GM12878 (cell line): ENCODE measurements at regions of chr3 and their contacts with region 1.

Region 1: GRCh38 chr3:61627768-61628185 is 66.4 kb downstream of the PTPRG start:
- DNase-seq: no peak
- ATAC-seq: no peak
- H3K4me3 ChIP-seq: no peak overlapping the region
- H3K27ac ChIP-seq: no peak overlapping the region
- H3K4me1 ChIP-seq: no peaks in the 10 kb centered on the region; the same call in 1 of the 2 replicates
- H3K27me3 ChIP-seq: 0 out of 4 replicates have a peak, but pooled peaks cover 0 to 1% of the 10 kb centered on the region in 2 experiments
- CTCF ChIP-seq: no peak
- EP300 ChIP-seq: no peak
- POLR2A ChIP-seq: no peak
- RAD21 ChIP-seq: no peak

Region 2: GRCh38 chr3:61617041-61617440 is 10.7 kb before region 1 on chr3:
- CTCF ChIA-PET with region 1: interaction called, 3 read pairs
- POLR2A ChIA-PET with region 1: interaction called, 3 read pairs
- RAD21 ChIA-PET with region 1: no interaction called
- SMC1A ChIA-PET with region 1: interaction called, 19 read pairs
- in situ Hi-C with region 1: no loop called
- intact Hi-C with region 1: no loop called
- DNase-seq: no peak
- ATAC-seq: no peak
- H3K4me3 ChIP-seq: no peak overlapping the region
- H3K27ac ChIP-seq: no peak overlapping the region
- H3K4me1 ChIP-seq: no peaks in the 10 kb centered on the region
- H3K27me3 ChIP-seq: peaks cover 0 to 3% of the 10 kb centered on the region in 2 experiments; a peak in 2 of 4 replicates
- CTCF ChIP-seq: no peak
- EP300 ChIP-seq: no peak
- POLR2A ChIP-seq: no peak
- RAD21 ChIP-seq: no peak